ENCODE measurements at regions of chr1 and their contacts with region 1.

Region 1: DNA sequence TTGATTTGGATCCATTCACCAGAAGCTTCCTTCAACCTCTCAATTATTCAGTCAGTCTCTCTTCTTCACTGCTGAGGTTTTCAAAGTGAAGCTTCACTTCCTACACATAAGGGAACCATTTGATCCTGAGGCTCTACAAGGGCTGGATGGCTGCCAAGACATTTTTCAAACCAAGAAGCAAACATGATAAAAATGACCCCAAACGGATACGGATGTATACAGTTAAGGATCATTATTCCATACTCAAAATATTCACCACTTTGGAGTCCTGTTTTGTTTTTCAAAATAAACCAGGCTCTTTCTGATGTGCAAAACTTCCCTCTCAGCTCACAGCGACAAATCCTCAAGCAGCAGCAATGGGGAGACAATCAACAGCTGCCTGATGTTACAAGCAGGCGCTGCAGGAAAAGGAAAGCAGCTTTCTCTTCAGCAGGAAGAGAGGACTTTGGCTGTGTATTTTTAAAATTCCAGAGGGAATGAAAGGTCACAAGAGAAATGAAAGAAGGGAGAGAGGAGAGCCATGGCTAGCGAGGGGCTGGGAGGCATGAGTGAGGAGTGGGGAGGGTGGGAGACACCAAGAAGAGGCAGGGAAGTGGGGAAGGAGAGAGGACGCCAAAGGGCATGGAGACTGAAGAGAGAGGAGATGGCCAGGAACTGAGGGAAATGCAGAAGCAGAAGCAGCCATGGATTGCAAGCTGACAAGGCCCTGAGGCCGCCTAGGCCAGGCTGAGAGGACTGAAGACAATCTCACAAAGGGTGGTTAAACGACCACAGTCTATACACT is 145.4 kb downstream of the SLC45A1 start:
- DNase-seq: peak in 1 of 2 donors; percentile 68
- ATAC-seq: peak; percentile 61 to 82 (median 74)
- H3K4me3 ChIP-seq: peak overlapping the region in 3 of 10 donors; percentile 1 to 25 (median 2)
- H3K27ac ChIP-seq: peak overlapping the region; percentile 3 to 89 (median 78)
- H3K4me1 ChIP-seq: peaks cover 12 to 62% (median 51%) of the 10 kb centered on the region in 9 donors
- H3K27me3 ChIP-seq: no peaks in the 10 kb centered on the region
- CTCF ChIP-seq: no peak

Region 2: GRCh38 chr1:8510041-8510823 is 46.9 kb after region 1 on chr1:
- intact Hi-C with region 1: loop called in 1 of 10 experiments (anchors 10 kb)
- DNase-seq: no peak
- ATAC-seq: peak in 6 of 8 donors; percentile 50 to 64 (median 61)
- H3K4me3 ChIP-seq: peak overlapping the region in 5 of 10 donors; percentile 4 to 26 (median 6)
- H3K27ac ChIP-seq: peak overlapping the region; percentile 10 to 71 (median 62)
- H3K4me1 ChIP-seq: peaks cover 5 to 37% (median 25%) of the 10 kb centered on the region in 9 donors
- H3K27me3 ChIP-seq: no peaks in the 10 kb centered on the region
- CTCF ChIP-seq: no peak

Region 3: DNA sequence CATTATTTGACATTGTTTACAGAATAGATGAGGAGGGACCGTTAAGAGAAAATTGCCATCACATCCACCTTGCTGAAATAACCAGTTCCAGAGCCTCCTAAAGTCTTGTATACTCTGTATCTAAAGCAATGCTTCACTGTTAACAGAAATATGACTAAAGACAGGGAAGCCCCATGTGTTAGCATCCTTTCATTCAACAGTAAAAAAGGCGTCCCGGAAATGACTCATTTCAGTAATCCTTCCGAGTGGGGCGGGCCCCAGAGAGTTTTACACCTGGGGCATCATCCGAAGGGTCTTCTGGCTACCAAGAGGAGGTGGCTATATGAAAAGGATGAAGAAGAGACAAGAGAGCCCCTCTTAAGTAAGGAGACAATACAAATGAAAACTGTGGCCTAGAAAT is 81.7 kb after region 1 on chr1:
- intact Hi-C with region 1: no loop called
- DNase-seq: no peak
- ATAC-seq: no peak
- H3K4me3 ChIP-seq: no peak overlapping the region
- H3K27ac ChIP-seq: no peak overlapping the region
- H3K4me1 ChIP-seq: peaks cover 0 to 12% (median 0%) of the 10 kb centered on the region in 9 donors
- H3K27me3 ChIP-seq: no peaks in the 10 kb centered on the region
- CTCF ChIP-seq: no peak